Ovary (tissue), 10 donors: ENCODE measurements at regions of chr4 and their contacts with region 1.

Region 1: GRCh38 chr4:2095789-2096570 is 36.9 kb downstream of the NAT8L start:
- DNase-seq: no peak
- H3K4me3 ChIP-seq: no peak overlapping the region
- H3K27ac ChIP-seq: no peak overlapping the region
- H3K4me1 ChIP-seq: no peaks in the 10 kb centered on the region
- H3K27me3 ChIP-seq: no peaks in the 10 kb centered on the region
- CTCF ChIP-seq: no peak
- EP300 ChIP-seq: no peak
- POLR2A ChIP-seq: no peak

Region 2: GRCh38 chr4:1492651-1493537 is 603.1 kb before region 1 on chr4:
- intact Hi-C with region 1: loop called in 1 of 4 experiments (anchors 5 kb)
- DNase-seq: peak in 1 of 5 donors; percentile 13
- H3K4me3 ChIP-seq: no peak overlapping the region
- H3K27ac ChIP-seq: no peak overlapping the region
- H3K4me1 ChIP-seq: no peaks in the 10 kb centered on the region
- H3K27me3 ChIP-seq: no peaks in the 10 kb centered on the region
- CTCF ChIP-seq: no peak
- EP300 ChIP-seq: no peak
- POLR2A ChIP-seq: no peak

Region 3: GRCh38 chr4:1960170-1960825 is 135.7 kb before region 1 on chr4:
- intact Hi-C with region 1: no loop called
- DNase-seq: no peak
- H3K4me3 ChIP-seq: no peak overlapping the region
- H3K27ac ChIP-seq: no peak overlapping the region
- H3K4me1 ChIP-seq: no peaks in the 10 kb centered on the region
- H3K27me3 ChIP-seq: no peaks in the 10 kb centered on the region
- CTCF ChIP-seq: no peak
- EP300 ChIP-seq: no peak
- POLR2A ChIP-seq: no peak

Region 4: GRCh38 chr4:2290974-2291704 is 195.2 kb after region 1 on chr4:
- intact Hi-C with region 1: no loop called
- DNase-seq: peak in 1 of 5 donors; percentile 33
- H3K4me3 ChIP-seq: no peak overlapping the region
- H3K27ac ChIP-seq: no peak overlapping the region
- H3K4me1 ChIP-seq: no peaks in the 10 kb centered on the region
- H3K27me3 ChIP-seq: no peaks in the 10 kb centered on the region
- CTCF ChIP-seq: no peak
- EP300 ChIP-seq: no peak
- POLR2A ChIP-seq: no peak